A549 (cell line): ENCODE measurements at regions of chr9 and their contacts with region 1.

Region 1: DNA sequence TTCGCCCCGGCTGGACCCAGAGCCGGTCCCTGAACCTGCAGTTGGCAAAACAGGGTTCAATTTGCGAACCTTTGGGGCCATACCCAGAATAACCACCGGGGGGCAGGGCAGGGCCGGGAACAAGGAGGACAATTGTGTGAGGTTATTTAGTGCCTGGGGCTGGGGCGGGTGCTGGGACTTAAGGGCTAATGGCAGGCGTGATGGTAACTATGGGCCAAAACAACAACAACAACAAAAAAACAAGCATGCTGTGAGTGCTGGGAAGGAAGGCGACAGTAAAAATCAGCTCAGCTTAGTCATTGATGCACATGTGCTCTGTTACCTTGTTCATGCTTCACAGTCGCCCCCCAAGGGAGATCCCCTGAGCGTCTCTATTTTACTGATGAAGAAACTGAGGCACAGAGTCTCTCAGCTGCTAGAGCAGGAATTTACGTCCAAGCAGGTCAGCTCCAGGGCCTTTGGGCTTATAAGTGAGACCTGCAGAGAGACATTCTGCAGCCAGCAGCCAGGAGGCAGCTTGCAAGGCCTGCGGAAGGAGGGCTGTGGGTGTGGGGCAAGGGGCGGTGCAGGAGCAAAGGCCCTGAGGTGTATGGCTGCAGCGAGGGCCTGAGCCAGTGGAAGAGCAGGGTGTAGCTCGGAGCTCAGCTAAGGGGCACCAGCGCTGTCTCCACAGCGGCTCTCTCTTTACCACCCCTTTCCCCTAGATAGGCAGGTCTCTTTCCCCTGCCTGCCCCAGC is 106.0 kb downstream of the PHF2 start:
- DNase-seq: peak; percentile 62 to 66
- ATAC-seq: peak; percentile 63 to 83
- H3K4me3 ChIP-seq: no peak overlapping the region
- H3K27ac ChIP-seq: no peak overlapping the region
- H3K4me1 ChIP-seq: no peaks in the 10 kb centered on the region
- CTCF ChIP-seq: peak; percentile 74
- EP300 ChIP-seq: no peak
- POLR2A ChIP-seq: no peak
- RAD21 ChIP-seq: peak; percentile 87 to 90

Region 2: DNA sequence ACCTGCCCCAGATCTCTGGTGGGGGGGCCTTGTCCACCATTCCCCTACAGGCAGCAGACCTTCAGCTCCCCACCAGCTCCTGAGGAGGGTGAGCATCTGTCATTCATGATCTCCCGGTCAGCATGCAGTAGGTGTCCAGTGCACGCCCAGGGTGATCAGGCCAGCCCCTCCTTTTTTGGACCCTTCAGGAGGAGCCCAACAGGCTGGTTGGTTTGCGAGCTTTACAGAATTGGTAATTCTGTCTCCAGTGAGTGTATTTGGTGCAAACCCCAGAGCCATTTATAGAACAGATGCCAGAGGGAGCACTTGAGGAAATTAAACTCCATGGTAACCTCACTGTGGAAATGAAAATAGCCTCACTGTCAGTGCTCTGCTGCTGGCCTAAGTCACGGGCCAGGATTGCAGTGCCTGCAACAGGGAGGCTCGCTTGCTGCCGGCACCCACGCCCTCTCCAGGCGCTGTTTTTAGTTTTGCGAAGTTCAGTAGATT is 475.0 kb before region 1 on chr9:
- CTCF ChIA-PET with region 1: no interaction called
- POLR2A ChIA-PET with region 1: no interaction called
- DNase-seq: no peak
- ATAC-seq: no peak; a peak in 1 of 6 replicates
- H3K4me3 ChIP-seq: no peak overlapping the region
- H3K27ac ChIP-seq: no peak overlapping the region
- H3K4me1 ChIP-seq: no peaks in the 10 kb centered on the region
- CTCF ChIP-seq: no peak
- EP300 ChIP-seq: no peak
- POLR2A ChIP-seq: no peak
- RAD21 ChIP-seq: no peak

Region 3: GRCh38 chr9:93669116-93669957 is 13.1 kb before region 1 on chr9:
- CTCF ChIA-PET with region 1: interaction called, 22 read pairs
- POLR2A ChIA-PET with region 1: no interaction called
- DNase-seq: no peak
- ATAC-seq: peak; percentile 20 to 45; a peak in 3 of 6 replicates
- H3K4me3 ChIP-seq: no peak overlapping the region
- H3K27ac ChIP-seq: no peak overlapping the region
- H3K4me1 ChIP-seq: no peaks in the 10 kb centered on the region
- CTCF ChIP-seq: no peak
- EP300 ChIP-seq: no peak
- POLR2A ChIP-seq: no peak
- RAD21 ChIP-seq: no peak

Region 4: DNA sequence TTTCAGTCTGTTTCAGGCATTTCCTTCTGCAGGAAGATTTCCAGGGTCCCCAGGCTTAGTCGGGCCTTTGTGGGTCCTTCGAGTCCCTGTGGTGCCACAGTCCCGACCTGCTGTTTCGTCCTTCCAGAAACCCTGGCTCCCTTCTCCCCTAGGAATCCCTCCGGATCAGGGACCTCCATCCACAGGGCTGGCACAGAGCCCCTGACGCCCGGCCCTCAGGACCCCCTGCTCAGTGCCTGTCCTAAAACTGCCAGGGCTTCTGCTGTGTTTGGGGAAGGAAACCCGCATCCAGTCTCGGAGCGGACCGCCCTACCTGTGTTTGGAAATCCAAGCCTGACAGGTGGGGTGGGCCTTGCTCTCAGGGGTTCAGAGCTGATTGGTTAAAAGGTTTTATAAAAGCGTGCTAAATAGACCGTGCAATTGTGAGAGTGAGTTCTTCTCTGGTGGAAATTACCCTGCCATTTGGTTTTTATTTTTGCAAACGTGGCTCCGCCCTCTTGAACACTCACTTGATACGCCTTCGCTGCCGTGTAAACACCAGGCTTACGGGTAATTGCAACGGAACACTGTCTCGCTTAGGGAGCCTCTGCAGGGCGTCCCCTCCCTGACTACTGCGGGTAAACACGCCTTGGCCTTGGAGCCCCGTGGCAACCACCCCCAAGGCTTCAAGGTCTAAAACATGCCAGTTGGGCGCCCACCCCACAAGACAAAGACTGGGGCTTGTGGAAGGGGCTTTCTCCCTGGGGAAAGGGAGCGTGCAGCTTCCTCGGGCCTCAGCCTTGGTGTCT is 15.1 kb after region 1 on chr9:
- CTCF ChIA-PET with region 1: interaction called, 27 read pairs
- POLR2A ChIA-PET with region 1: no interaction called
- DNase-seq: no peak
- ATAC-seq: no peak
- H3K4me3 ChIP-seq: no peak overlapping the region
- H3K27ac ChIP-seq: no peak overlapping the region
- H3K4me1 ChIP-seq: no peaks in the 10 kb centered on the region
- CTCF ChIP-seq: no peak
- EP300 ChIP-seq: no peak
- POLR2A ChIP-seq: no peak
- RAD21 ChIP-seq: no peak

Region 5: GRCh38 chr9:93761822-93762221 is 79.4 kb after region 1 on chr9:
- CTCF ChIA-PET with region 1: no interaction called
- POLR2A ChIA-PET with region 1: no interaction called
- DNase-seq: no peak
- ATAC-seq: no peak
- H3K4me3 ChIP-seq: no peak overlapping the region
- H3K27ac ChIP-seq: no peak overlapping the region
- H3K4me1 ChIP-seq: no peaks in the 10 kb centered on the region
- CTCF ChIP-seq: no peak
- EP300 ChIP-seq: no peak
- POLR2A ChIP-seq: no peak
- RAD21 ChIP-seq: no peak

Region 6: DNA sequence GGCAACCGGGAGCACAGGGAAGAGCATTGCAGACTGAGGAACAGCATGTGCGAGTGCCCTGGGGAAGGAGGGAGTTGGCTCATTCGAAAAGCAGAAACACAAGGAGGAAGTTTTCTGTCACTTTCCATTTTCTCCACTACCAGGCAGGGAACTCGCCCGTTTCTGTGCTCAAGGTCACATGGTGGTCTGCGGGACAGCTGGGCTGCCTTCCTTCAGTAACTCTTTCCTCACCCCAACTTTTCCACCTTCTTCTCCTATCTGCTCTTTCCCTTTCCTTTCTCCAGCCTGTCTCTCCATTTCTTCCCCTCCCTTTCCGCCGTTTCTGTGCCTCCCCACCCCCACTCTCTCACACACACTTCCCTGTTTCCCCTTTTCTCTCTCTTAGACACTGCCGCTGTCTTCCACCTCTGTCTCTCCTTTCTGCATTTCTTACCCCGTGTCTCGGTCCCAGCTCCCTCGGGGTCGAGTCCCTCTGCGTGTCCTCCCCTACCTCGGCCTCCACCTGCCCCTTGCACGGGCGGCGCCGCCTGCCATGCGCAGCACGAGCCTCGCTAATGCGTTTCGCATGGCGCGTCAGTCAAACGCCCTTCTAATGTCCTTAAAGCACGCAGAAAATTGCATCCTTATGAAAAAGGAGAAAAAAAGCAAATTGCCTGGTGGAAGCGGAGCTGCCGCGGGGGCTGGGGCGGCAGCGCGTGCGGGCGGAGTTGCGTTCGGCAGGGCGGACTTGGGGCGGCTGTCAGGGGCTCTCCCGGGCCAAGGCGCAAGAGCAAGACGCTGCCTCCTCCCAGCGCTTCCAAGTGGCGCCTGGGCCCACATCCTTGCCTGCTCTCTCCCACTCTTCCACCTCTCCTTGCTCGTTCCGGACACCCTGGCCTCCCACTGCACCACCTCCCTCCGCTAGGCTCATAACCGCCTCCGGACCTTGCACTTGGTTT is 263.3 kb after region 1 on chr9:
- CTCF ChIA-PET with region 1: interaction called, 12 read pairs
- POLR2A ChIA-PET with region 1: no interaction called
- DNase-seq: no peak
- ATAC-seq: peak; percentile 11 to 53; a peak in 3 of 6 replicates
- H3K4me3 ChIP-seq: peak overlapping the region; percentile 54
- H3K27ac ChIP-seq: peak overlapping the region in 1 of 2 experiments; percentile 67; a peak in 4 of 6 replicates
- H3K4me1 ChIP-seq: no peaks in the 10 kb centered on the region
- CTCF ChIP-seq: no peak
- EP300 ChIP-seq: no peak
- POLR2A ChIP-seq: no peak
- RAD21 ChIP-seq: no peak

Region 7: DNA sequence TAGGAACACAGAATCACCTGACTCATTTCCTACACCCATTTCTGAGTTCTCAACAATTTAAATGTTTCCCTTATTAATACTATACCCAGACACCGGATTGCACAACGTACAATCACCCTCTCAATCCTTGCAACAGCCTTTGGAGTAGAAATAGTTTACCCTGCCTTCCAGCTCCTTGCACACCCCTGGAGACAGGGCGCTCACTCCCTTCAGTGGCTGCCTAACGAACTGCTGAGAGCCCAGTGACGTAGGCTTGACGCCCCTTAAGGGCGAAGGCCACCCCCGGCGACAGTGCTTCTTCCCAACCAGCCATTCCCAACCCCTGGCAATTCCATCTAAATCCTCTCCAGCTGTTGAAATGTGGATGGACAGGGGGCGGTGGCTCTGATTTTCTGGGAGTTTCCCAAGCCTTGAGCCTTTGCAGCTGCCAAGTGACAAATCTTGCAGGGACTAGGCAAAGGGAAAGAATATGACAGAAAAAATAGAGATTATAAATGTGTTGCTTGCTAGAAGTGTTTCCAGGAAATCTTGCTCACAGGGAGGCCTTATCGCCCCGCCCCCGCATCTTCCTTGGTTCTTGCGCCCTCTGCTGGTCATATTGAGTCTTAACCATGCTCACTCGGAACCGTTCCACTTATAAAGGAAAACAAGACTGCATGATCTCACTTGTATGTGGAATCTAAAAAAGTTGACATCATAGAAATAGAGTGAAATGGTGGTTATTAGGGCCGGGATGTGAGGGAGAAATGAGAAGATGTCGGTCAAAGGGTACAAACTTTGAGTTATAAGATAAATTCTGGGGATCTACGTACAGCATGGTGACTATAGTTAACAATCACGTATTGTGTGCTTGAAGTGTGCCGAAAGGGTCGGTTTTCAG is 280.4 kb after region 1 on chr9:
- CTCF ChIA-PET with region 1: interaction called, 141 read pairs
- POLR2A ChIA-PET with region 1: no interaction called
- DNase-seq: peak; percentile 78 to 82
- ATAC-seq: peak; percentile 65 to 89; a peak in 5 of 6 replicates
- H3K4me3 ChIP-seq: no peak overlapping the region
- H3K27ac ChIP-seq: 0 out of 6 replicates have a peak overlapping the region, but pooled peaks of 1 of the 2 experiments have one; percentile 37
- H3K4me1 ChIP-seq: peaks cover 3% of the 10 kb centered on the region; the same call in 1 of the 3 replicates
- CTCF ChIP-seq: peak; percentile 86
- EP300 ChIP-seq: no peak
- POLR2A ChIP-seq: no peak
- RAD21 ChIP-seq: peak; percentile 82 to 87

Region 8: DNA sequence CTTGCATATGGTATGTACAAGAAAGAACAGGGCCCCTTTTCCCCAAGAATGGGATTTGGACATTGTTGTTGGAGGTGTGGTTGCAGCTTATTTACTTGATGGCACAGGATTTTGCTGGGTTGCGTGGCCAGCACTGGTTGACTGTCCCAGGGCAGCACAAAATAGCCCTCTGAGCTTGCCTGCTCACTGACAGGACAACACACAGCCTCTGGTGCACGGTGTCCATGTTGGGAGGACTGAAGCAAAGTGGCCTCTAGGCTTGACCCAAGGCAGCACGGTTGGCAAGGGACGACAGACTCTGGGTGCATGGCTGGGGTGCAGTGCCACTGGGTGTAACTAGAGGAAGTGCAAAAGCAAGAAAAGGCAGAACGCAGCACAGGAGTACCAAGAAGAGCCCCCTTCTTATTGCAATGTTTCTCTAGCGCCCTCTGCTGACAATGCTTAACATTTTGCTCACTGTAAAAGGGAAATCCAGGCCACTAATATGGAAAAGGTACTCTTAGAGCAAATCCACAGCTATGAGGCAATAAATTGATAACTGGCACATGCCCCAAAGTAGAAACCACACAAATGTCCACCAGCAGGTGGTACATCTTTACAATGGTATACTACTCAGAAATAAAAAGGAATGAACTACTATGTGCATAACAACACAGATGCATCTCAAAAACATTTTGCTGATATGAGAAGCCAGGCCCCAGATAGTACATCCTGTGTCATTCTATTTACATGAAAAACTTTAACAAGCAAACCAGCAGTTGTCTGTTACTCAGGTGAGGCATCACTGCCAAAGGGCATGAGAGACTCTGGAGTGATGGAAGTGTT is 320.1 kb after region 1 on chr9:
- CTCF ChIA-PET with region 1: interaction called, 12 read pairs
- POLR2A ChIA-PET with region 1: no interaction called
- DNase-seq: peak; percentile 20 to 57
- ATAC-seq: peak in 1 of 2 experiments; percentile 78; a peak in 4 of 6 replicates
- H3K4me3 ChIP-seq: no peak overlapping the region
- H3K27ac ChIP-seq: no peak overlapping the region
- H3K4me1 ChIP-seq: no peaks in the 10 kb centered on the region
- CTCF ChIP-seq: peak; percentile 48
- EP300 ChIP-seq: no peak
- POLR2A ChIP-seq: no peak
- RAD21 ChIP-seq: peak; percentile 49 to 59